CD4-positive, alpha-beta T cell (primary cell): ENCODE measurements at regions of chr1 and their contacts with region 1.

Region 1: GRCh38 chr1:202498542-202498941 is 150.0 kb downstream of the PPP1R12B start:
- DNase-seq: no peak
- ATAC-seq: no peak
- H3K4me3 ChIP-seq: no peak overlapping the region
- H3K4me3 Mint-ChIP-seq: no peak overlapping the region
- H3K27ac ChIP-seq: no peak overlapping the region
- H3K27ac Mint-ChIP-seq: no peak overlapping the region
- H3K4me1 ChIP-seq: no peaks in the 10 kb centered on the region
- H3K4me1 Mint-ChIP-seq: no peaks in the 10 kb centered on the region
- H3K27me3 ChIP-seq: no peaks in the 10 kb centered on the region
- H3K27me3 Mint-ChIP-seq: no peaks in the 10 kb centered on the region
- CTCF ChIP-seq: no peak

Region 2: DNA sequence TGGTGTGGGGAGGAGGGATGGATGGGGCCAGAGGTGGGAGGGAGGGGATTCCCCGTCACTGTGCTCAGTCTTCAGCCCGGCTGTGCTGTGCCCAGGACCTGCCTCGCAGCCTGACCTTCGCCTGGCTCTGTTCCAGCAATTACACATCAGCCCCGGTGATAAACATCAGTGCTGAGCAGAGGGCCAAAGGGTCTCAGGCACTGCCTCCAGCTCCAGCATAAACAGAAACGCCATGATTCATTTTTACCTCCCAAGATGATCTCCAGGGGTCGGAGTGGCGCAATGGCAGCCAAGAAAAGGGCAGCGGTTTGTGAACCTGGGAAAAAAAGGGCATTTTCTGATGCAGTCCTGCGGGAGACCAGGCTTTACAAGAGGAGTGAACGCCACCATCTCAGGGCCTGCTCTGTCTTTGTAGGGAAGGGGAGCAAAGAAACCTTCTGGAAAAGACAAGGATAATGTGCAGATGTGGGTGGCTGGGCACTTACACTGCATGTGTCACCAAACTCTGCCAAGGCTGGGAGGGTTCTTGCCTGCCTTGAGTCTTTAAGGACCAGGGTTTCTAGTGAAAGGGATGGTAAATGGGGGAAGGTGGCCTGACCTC is 581.8 kb before region 1 on chr1:
- CTCF ChIA-PET with region 1: no interaction called
- POLR2A ChIA-PET with region 1: no interaction called
- intact Hi-C with region 1: loop called in 1 of 2 experiments (anchors 5 kb)
- DNase-seq: no peak
- ATAC-seq: no peak
- H3K4me3 ChIP-seq: no peak overlapping the region
- H3K4me3 Mint-ChIP-seq: no peak overlapping the region
- H3K27ac ChIP-seq: no peak overlapping the region
- H3K27ac Mint-ChIP-seq: no peak overlapping the region
- H3K4me1 ChIP-seq: no peaks in the 10 kb centered on the region
- H3K4me1 Mint-ChIP-seq: no peaks in the 10 kb centered on the region
- H3K27me3 ChIP-seq: peaks cover 0 to 2% of the 10 kb centered on the region in 2 experiments
- H3K27me3 Mint-ChIP-seq: peaks cover 21% of the 10 kb centered on the region
- CTCF ChIP-seq: no peak

Region 3: GRCh38 chr1:202710070-202711045 is 211.8 kb after region 1 on chr1 and contains the start of gene SYT2:
- CTCF ChIA-PET with region 1: no interaction called
- POLR2A ChIA-PET with region 1: no interaction called
- intact Hi-C with region 1: loop called in 1 of 2 experiments (anchors 10 kb)
- DNase-seq: peak in 3 of 14 experiments; percentile 3 to 14 (median 13)
- ATAC-seq: no peak
- H3K4me3 ChIP-seq: no peak within 1 kb of the TSS
- H3K4me3 Mint-ChIP-seq: no peak within 1 kb of the TSS
- H3K27ac ChIP-seq: no peak within 1 kb of the TSS
- H3K27ac Mint-ChIP-seq: no peak within 1 kb of the TSS
- H3K4me1 ChIP-seq: peaks cover 10% of the 10 kb centered on the region
- H3K4me1 Mint-ChIP-seq: no peaks in the 10 kb centered on the region
- H3K27me3 ChIP-seq: peaks cover 50 to 63% of the 10 kb centered on the region in 2 experiments
- H3K27me3 Mint-ChIP-seq: peaks cover 70% of the 10 kb centered on the region
- CTCF ChIP-seq: no peak
- total RNA-seq, gene SYT2: not detected